Activated CD8-positive, alpha-beta T cell treated with anti-CD3 and anti-CD28 coated beads for 36 hours (primary cell): ENCODE measurements at regions of chr15 and their contacts with region 1.

Region 1: DNA sequence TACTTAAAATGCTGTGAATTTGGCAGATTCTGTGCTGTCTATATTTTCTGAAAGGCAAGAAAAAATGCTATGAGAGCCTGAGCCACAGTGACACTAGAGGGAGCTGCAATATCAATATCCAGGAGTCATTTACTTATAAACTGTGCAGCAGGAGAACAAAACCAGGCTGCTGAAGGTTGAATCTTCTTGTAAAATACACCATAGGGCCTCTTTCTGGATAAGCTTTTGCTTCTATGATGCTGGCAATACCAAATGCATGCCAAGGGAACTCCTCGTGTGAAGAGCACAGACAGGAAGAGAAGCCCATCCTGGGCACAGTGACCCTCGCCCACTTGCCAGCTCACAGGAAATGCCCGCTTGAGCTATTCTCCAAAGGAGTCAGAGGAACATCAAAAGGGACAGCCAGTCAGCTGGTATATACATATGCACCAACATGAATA is 48.0 kb upstream of the TSPAN3 start:
- DNase-seq: peak; percentile 61
- ATAC-seq: peak; percentile 67
- H3K4me3 Mint-ChIP-seq: no peak overlapping the region
- H3K27ac Mint-ChIP-seq: no peak overlapping the region
- H3K4me1 Mint-ChIP-seq: peaks cover 12% of the 10 kb centered on the region
- H3K27me3 Mint-ChIP-seq: no peaks in the 10 kb centered on the region
- CTCF ChIP-seq: peak; percentile 83

Region 2: DNA sequence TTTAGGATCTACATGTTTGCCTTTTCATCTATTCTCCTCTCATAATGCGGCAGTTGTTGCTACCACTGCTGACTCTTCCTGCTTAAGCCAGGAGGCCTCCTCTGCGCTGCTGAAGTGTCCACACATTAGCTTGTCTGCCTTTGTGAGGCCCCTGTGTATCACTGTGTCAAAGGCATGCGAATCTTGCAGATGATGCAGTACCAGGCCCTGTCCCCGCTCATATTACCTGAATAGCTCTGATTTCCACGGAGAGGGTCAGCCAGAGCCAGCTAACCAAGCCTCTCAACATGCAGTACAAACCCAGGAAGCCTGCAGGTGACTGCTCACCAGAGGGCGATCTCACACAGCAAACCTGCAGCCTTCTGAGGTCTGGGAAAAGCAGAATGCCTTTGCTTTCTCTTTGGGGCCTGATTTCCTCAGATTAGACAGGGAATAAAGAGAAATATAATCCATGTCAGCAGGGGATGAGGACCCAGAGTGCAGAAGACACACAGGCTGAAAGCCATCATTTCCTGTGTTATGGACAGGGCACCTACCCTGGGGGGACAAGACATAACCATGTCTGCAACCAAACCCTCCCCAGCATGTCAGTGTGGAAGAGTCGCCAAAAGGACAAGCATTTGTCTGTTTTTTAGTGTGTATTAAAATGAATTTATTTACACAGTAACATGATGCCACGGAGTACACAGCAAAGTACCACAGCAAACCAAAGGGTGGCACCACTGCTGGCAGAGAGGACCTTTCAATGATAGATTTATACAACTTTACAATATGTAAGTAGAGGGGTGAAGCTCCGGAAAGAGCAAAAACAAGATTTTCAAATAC is 11.2 kb before region 1 on chr15:
- CTCF ChIA-PET with region 1: interaction called, 30 read pairs
- POLR2A ChIA-PET with region 1: no interaction called
- intact Hi-C with region 1: no loop called
- DNase-seq: peak; percentile 65
- ATAC-seq: peak; percentile 65
- H3K4me3 Mint-ChIP-seq: no peak overlapping the region
- H3K27ac Mint-ChIP-seq: no peak overlapping the region
- H3K4me1 Mint-ChIP-seq: no peaks in the 10 kb centered on the region
- H3K27me3 Mint-ChIP-seq: no peaks in the 10 kb centered on the region
- CTCF ChIP-seq: peak; percentile 65

Region 3: GRCh38 chr15:77186594-77187011 is 67.7 kb after region 1 on chr15:
- CTCF ChIA-PET with region 1: interaction called, 24 read pairs
- POLR2A ChIA-PET with region 1: no interaction called
- intact Hi-C with region 1: no loop called
- DNase-seq: peak; percentile 33
- ATAC-seq: peak; percentile 29
- H3K4me3 Mint-ChIP-seq: no peak overlapping the region
- H3K27ac Mint-ChIP-seq: peak overlapping the region; percentile 79
- H3K4me1 Mint-ChIP-seq: peaks cover 62% of the 10 kb centered on the region
- H3K27me3 Mint-ChIP-seq: no peaks in the 10 kb centered on the region
- CTCF ChIP-seq: peak; percentile 70